K562 (cell line): ENCODE measurements at regions of chr18 and their contacts with region 1.

Region 1: DNA sequence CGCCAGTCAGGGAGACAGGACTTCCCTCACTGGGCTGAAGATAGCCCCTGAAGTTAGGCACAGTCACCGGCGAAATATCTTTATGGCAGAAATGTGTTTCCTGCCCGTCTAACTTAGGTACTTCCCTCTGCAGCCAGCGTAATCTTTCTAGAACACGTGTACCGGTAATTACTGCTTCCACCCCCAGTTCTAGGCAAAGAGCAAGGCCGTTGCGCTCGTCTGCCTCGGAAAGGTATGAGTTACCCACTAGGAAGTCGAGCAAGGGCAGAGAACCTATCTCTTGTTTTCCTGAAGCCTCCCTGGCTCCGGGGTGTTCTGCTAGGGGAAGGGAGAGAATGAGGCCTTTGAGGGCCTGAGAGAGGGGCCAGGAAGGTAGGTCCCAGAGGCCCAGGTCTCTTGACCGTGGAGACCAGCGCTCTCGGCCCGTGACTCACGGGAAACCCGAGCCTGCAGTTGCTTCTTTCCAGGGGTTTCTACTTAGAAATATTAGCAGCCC is 70.0 kb downstream of the TWSG1 start:
- DNase-seq: peak; percentile 69 to 91 (median 80)
- ATAC-seq: peak; percentile 92
- H3K4me3 ChIP-seq: peak overlapping the region; percentile 22
- H3K27ac ChIP-seq: peak overlapping the region; percentile 89
- H3K4me1 ChIP-seq: peaks cover 21% of the 10 kb centered on the region in 2 experiments; a peak in 4 of 5 replicates
- H3K27me3 ChIP-seq: no peaks in the 10 kb centered on the region
- CTCF ChIP-seq: no peak
- EP300 ChIP-seq: peak; percentile 70
- POLR2A ChIP-seq: peak; percentile 79
- RAD21 ChIP-seq: no peak; a peak in 2 of 4 replicates

Region 2: GRCh38 chr18:9366192-9366591 is 38.4 kb before region 1 on chr18:
- CTCF ChIA-PET with region 1: no interaction called
- POLR2A ChIA-PET with region 1: no interaction called
- in situ Hi-C with region 1: no loop called
- intact Hi-C with region 1: no loop called
- DNase-seq: no peak
- ATAC-seq: no peak
- H3K4me3 ChIP-seq: no peak overlapping the region
- H3K27ac ChIP-seq: no peak overlapping the region
- H3K4me1 ChIP-seq: no peaks in the 10 kb centered on the region
- H3K27me3 ChIP-seq: no peaks in the 10 kb centered on the region
- CTCF ChIP-seq: no peak; a peak in 1 of 6 replicates
- EP300 ChIP-seq: no peak
- POLR2A ChIP-seq: no peak
- RAD21 ChIP-seq: no peak

Region 3: DNA sequence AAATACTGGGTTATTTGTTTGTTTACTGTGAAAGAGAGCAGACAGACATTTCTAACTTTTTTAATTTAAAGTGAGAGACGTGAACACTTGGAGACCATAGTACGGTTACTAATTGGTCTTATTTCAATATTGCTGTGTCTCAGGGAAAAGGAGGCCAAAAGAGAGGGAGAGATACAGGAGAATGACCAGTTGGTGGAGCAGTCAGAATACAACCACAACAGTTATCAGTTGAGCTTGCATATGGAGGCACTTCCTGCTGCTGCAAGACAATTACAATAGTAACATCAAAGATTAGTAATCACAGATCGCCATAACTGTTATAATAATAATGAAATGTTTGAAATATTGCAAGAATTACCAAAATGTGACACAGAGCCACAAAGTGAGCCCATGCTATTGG is 11.9 kb before region 1 on chr18:
- CTCF ChIA-PET with region 1: no interaction called
- POLR2A ChIA-PET with region 1: interaction called, 13 read pairs
- in situ Hi-C with region 1: no loop called
- intact Hi-C with region 1: no loop called
- DNase-seq: peak in 1 of 4 experiments; percentile 33
- ATAC-seq: peak; percentile 87
- H3K4me3 ChIP-seq: no peak overlapping the region
- H3K27ac ChIP-seq: no peak overlapping the region
- H3K4me1 ChIP-seq: no peaks in the 10 kb centered on the region
- H3K27me3 ChIP-seq: no peaks in the 10 kb centered on the region
- CTCF ChIP-seq: peak; percentile 8 to 39 (median 21); a peak in 2 of 6 replicates
- EP300 ChIP-seq: no peak
- POLR2A ChIP-seq: no peak
- RAD21 ChIP-seq: peak; percentile 10 to 74; a peak in 2 of 4 replicates